H1 (cell line): ENCODE measurements at regions of chr17 and their contacts with region 1.

Region 1: GRCh38 chr17:35808962-35809854 is at the start of gene TAF15:
- DNase-seq: peak; percentile 89 to 94
- H3K4me3 ChIP-seq: peak within 1 kb of the TSS; percentile 91 to 98 (median 94)
- H3K27ac ChIP-seq: peak within 1 kb of the TSS; percentile 99
- H3K4me1 ChIP-seq: peaks cover 0 to 10% (median 0%) of the 10 kb centered on the region in 4 experiments; a peak in 3 of 7 replicates
- H3K27me3 ChIP-seq: no peaks in the 10 kb centered on the region
- CTCF ChIP-seq: peak; percentile 67 to 76 (median 72)
- EP300 ChIP-seq: peak in 1 of 2 experiments; percentile 100; a peak in 2 of 3 replicates
- POLR2A ChIP-seq: peak; percentile 97 to 99
- RAD21 ChIP-seq: peak; percentile 50 to 52; a peak in 3 of 4 replicates
- total RNA-seq, gene TAF15: 323 and 338 TPM in 2 replicates

Region 2: DNA sequence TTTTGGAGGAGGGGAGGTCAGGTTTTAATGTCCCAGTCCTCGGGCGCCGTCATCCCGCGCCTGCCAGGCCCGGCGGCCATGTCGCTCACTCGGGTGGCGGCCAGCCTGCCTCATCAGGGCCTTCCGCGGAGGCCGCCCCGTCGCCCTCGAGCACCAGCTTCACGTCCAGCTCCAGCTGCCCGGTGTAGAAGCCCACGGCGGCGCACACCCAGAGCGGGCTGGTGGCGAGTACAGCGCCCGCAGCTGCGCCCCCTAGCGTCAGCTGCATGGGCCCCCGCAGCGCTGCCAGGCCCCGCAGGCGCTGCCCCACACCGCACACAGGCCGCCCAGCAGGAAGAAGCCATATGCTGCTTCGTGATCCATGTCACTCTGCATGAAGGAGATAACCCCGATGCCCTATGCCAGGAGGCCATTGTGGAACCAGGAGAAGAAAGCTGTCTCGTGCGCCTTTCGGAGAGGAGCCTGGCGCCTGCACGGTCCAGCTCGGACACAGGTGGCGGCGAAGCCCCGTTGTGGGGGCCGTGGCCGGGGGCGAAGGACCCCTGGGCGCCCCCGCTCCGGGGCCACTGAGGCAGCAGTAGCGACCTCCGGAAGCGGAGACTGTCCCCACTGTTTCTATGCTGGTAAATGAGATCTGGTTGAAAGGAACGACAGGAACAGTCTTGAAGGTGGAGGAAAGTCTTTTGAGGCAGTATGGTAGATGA is 212.5 kb before region 1 on chr17:
- CTCF ChIA-PET with region 1: no interaction called
- POLR2A ChIA-PET with region 1: no interaction called
- DNase-seq: peak; percentile 47 to 82
- H3K4me3 ChIP-seq: 0 out of 8 replicates have a peak overlapping the region, but pooled peaks of 1 of the 4 experiments have one; percentile 0
- H3K27ac ChIP-seq: no peak overlapping the region
- H3K4me1 ChIP-seq: no peaks in the 10 kb centered on the region
- H3K27me3 ChIP-seq: no peaks in the 10 kb centered on the region
- CTCF ChIP-seq: peak; percentile 87 to 90 (median 89)
- EP300 ChIP-seq: peak in 1 of 2 experiments; percentile 36; a peak in 1 of 3 replicates
- POLR2A ChIP-seq: no peak
- RAD21 ChIP-seq: peak; percentile 43 to 58

Region 3: DNA sequence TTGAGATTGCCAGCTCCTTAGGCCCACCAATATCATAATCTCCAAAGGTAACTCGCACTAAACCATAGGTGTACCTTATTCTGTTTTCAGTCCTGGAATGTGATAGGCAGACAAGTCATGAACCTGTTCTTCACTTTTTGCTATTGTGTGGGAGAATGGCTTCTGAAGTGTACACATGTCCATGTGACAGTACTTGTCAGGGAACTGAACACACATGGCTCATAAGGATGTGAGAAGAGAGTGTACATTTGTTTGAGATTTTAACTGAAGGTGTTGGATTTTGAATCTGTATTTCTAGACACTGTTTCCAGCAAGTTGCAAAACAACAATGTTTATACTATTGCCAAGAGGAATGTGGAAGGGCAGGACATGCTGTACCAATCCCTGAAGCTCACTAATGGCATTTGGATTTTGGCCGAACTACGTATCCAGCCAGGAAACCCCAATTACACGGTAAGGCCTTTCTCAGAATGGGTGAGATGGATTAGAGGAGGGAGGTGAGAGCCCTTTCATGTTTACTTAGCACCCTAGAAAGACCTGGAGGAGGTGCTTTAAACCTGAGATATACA is 92.2 kb before region 1 on chr17:
- CTCF ChIA-PET with region 1: no interaction called
- POLR2A ChIA-PET with region 1: no interaction called
- DNase-seq: no peak
- H3K4me3 ChIP-seq: no peak overlapping the region
- H3K27ac ChIP-seq: no peak overlapping the region
- H3K4me1 ChIP-seq: no peaks in the 10 kb centered on the region
- H3K27me3 ChIP-seq: peaks cover 0 to 1% (median 0%) of the 10 kb centered on the region in 4 experiments; a peak in 1 of 7 replicates
- CTCF ChIP-seq: no peak
- EP300 ChIP-seq: no peak
- POLR2A ChIP-seq: no peak
- RAD21 ChIP-seq: no peak

Region 4: DNA sequence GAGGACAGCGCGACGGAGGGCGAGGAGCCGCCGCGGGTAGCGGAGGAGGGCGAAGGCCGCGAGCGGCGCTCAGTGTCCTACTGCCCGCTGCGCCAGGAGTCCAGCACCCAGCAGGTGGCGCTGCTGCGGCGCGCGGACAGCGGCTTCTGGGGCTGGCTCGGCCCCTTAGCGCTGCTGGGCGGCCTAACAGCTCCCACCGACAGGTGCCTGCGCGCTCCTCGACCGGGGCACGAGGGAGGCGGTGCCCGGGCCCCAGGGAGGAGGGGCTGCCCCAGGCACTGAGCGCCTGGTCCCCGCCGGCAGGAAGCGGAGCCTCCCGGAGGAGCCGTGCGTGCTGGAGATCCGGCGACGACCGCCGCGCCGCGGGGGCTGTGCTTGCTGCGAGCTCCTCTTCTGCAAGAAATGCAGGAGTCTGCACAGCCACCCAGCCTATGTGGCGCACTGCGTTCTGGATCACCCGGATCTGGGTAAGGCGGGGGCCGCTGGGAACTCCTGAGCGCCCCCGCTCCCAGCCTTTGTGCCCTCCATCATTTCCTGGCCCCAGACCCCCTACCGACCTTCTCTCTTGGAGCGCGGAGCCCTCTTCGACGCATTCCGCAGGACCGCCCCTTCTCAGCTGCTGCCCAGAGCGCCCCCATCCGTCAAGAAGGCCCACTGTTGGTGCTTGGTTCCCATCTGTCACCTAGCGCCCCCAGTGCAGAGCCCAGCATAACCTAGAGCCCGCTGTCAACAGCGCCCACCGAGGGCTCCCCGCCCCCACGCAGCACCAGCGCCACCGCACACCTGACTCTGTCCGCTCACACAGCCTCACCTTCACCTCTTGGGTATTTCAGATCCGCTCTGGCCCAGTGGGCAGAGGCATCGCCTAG is 44.9 kb before region 1 on chr17:
- CTCF ChIA-PET with region 1: interaction called, 107 read pairs
- POLR2A ChIA-PET with region 1: interaction called, 62 read pairs
- DNase-seq: peak; percentile 90 to 96
- H3K4me3 ChIP-seq: peak overlapping the region; percentile 16 to 62 (median 50); a peak in 7 of 8 replicates
- H3K27ac ChIP-seq: no peak overlapping the region
- H3K4me1 ChIP-seq: peaks cover 0 to 12% (median 7%) of the 10 kb centered on the region in 4 experiments; a peak in 5 of 7 replicates
- H3K27me3 ChIP-seq: peaks cover 0 to 3% (median 2%) of the 10 kb centered on the region in 4 experiments; a peak in 3 of 7 replicates
- CTCF ChIP-seq: peak; percentile 96 to 99 (median 97)
- EP300 ChIP-seq: peak in 1 of 2 experiments; percentile 59; a peak in 1 of 3 replicates
- POLR2A ChIP-seq: peak in 1 of 2 experiments; percentile 34; a peak in 1 of 3 replicates
- RAD21 ChIP-seq: peak; percentile 75 to 86

Region 5: DNA sequence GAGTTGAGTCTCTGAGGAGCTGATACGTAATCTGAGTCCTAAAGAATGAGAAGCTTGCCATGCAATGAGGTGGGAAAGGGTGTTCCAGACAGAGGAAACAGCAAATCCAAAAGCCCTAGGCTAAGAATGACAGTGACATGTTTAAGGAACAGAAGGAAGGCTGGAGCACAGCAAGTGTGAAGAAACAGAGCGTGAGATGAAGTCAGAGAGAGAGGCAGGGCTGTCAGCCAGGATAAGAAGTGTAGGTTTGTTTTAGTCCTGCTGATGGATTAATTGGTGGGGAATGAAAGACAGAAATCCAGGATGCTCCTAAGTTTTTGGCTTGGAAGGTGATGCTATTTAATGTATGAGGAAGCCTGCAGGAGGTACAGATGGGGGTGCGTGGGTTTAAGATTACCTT is 28.3 kb before region 1 on chr17:
- CTCF ChIA-PET with region 1: interaction called, 14 read pairs
- POLR2A ChIA-PET with region 1: interaction called, 13 read pairs
- DNase-seq: no peak
- H3K4me3 ChIP-seq: no peak overlapping the region
- H3K27ac ChIP-seq: no peak overlapping the region
- H3K4me1 ChIP-seq: peaks cover 0 to 2% (median 0%) of the 10 kb centered on the region in 4 experiments; a peak in 1 of 7 replicates
- H3K27me3 ChIP-seq: no peaks in the 10 kb centered on the region
- CTCF ChIP-seq: no peak
- EP300 ChIP-seq: no peak
- POLR2A ChIP-seq: no peak
- RAD21 ChIP-seq: no peak

Region 6: GRCh38 chr17:35794988-35795824 is 14.0 kb before region 1 on chr17 and contains the start of gene MMP28:
- CTCF ChIA-PET with region 1: interaction called, 37 read pairs
- POLR2A ChIA-PET with region 1: interaction called, 50 read pairs
- DNase-seq: peak in 1 of 2 experiments; percentile 81
- H3K4me3 ChIP-seq: peak within 1 kb of the TSS; percentile 27 to 66 (median 60)
- H3K27ac ChIP-seq: no peak within 1 kb of the TSS
- H3K4me1 ChIP-seq: peaks cover 0 to 10% (median 5%) of the 10 kb centered on the region in 4 experiments; a peak in 5 of 7 replicates
- H3K27me3 ChIP-seq: peaks cover 23 to 54% (median 43%) of the 10 kb centered on the region in 4 experiments
- CTCF ChIP-seq: no peak
- EP300 ChIP-seq: no peak
- POLR2A ChIP-seq: no peak
- RAD21 ChIP-seq: no peak
- total RNA-seq, gene MMP28: not detected in 2 replicates

Region 7: GRCh38 chr17:35849469-35850348 is 40.5 kb after region 1 on chr17:
- CTCF ChIA-PET with region 1: interaction called, 5 read pairs
- POLR2A ChIA-PET with region 1: interaction called, 16 read pairs
- DNase-seq: peak; percentile 31 to 58
- H3K4me3 ChIP-seq: no peak overlapping the region
- H3K27ac ChIP-seq: no peak overlapping the region
- H3K4me1 ChIP-seq: no peaks in the 10 kb centered on the region
- H3K27me3 ChIP-seq: no peaks in the 10 kb centered on the region
- CTCF ChIP-seq: peak; percentile 12 to 81 (median 65)
- EP300 ChIP-seq: no peak
- POLR2A ChIP-seq: no peak
- RAD21 ChIP-seq: peak; percentile 64 to 77